ENCODE measurements at regions of chr3 and their contacts with region 1.

Region 1: DNA sequence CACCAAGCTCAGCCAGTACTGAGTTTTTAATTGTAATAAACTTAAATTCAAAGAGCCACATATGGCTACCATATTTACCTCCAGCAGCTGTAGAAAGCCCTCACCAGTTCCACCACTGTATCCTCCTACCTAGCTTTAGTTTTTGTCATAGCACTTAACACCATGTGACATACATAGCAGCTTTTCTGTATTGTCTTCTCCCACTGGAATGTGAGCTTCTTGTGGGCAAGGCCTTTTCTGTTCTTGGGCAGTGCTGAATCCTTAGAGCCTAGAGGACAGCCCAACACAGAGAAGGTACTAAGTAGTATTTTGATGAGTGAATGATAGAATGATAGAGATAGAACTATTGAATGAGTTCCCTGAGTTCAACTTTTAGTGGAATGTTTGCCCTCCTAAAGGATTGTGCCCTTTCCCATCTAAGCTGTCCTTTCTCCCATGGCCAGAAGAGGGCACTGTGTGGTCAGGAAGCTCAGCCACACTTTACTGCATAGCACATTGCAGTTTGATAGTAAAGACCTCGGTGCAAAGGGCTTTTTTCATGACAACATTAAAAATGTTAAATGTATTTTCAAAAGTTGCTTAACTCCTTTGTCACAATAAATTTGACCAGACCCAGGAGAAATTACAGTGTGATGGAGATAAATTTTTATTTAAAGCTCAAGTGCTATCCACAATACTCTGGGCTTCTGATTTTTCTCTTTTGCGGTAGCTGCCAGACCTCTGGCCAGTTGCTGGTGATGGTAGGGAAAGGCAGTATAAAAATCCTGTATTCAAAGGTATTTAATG is 115.8 kb downstream of the GHSR start:
- DNase-seq: peak; percentile 72
- ATAC-seq: peak; percentile 88
- H3K4me3 Mint-ChIP-seq: no peak overlapping the region
- H3K27ac Mint-ChIP-seq: peak overlapping the region; percentile 83
- H3K4me1 Mint-ChIP-seq: no peaks in the 10 kb centered on the region
- H3K27me3 Mint-ChIP-seq: no peaks in the 10 kb centered on the region
- CTCF ChIP-seq: peak; percentile 69

Region 2: GRCh38 chr3:172307141-172307560 is 25.3 kb before region 1 on chr3:
- CTCF ChIA-PET with region 1: interaction called, 20 read pairs
- POLR2A ChIA-PET with region 1: no interaction called
- DNase-seq: no peak
- ATAC-seq: no peak
- H3K4me3 Mint-ChIP-seq: no peak overlapping the region
- H3K27ac Mint-ChIP-seq: no peak overlapping the region
- H3K4me1 Mint-ChIP-seq: peaks cover 24% of the 10 kb centered on the region
- H3K27me3 Mint-ChIP-seq: no peaks in the 10 kb centered on the region
- CTCF ChIP-seq: no peak

Region 3: DNA sequence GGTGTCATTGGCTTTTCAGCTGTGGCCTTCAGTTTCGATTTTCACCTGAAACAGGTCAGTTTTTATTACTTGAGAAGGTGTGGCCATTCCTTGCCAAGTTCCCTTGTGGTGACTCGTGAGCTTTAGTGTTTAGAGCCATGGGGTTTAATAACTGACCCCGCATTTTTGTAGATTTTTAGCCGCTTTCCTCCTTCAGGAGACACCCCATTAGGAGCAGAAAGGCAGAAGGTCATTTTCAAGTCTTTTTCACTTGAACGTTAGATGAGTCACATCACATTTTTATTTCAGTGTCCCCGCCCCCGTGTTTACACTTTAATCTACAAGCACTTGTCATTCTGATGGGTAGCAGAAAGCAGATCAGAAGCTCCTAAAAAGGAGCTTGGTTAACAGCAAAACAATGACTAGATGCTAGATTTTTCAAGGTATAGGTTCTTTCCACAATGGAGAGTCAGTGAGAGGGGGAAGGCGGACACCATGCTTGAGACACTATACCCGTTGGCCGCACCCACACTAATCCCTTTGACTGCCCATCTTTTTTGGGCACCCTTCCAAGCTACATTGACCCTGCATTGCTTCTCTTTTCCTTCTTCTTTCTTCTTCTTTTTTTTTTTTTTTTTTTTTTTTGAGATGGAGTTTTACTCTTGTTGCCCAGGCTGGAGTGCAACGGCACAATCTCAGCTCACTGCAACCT is 16.9 kb before region 1 on chr3:
- CTCF ChIA-PET with region 1: interaction called, 20 read pairs
- POLR2A ChIA-PET with region 1: no interaction called
- DNase-seq: no peak
- ATAC-seq: no peak
- H3K4me3 Mint-ChIP-seq: no peak overlapping the region
- H3K27ac Mint-ChIP-seq: no peak overlapping the region
- H3K4me1 Mint-ChIP-seq: peaks cover 33% of the 10 kb centered on the region
- H3K27me3 Mint-ChIP-seq: no peaks in the 10 kb centered on the region
- CTCF ChIP-seq: no peak

Region 4: GRCh38 chr3:172321035-172321434 is 11.4 kb before region 1 on chr3:
- CTCF ChIA-PET with region 1: interaction called, 11 read pairs
- POLR2A ChIA-PET with region 1: no interaction called
- DNase-seq: no peak
- ATAC-seq: no peak
- H3K4me3 Mint-ChIP-seq: no peak overlapping the region
- H3K27ac Mint-ChIP-seq: peak overlapping the region; percentile 60; the same call in 1 of the 2 replicates
- H3K4me1 Mint-ChIP-seq: no peaks in the 10 kb centered on the region
- H3K27me3 Mint-ChIP-seq: no peaks in the 10 kb centered on the region
- CTCF ChIP-seq: no peak

Region 5: DNA sequence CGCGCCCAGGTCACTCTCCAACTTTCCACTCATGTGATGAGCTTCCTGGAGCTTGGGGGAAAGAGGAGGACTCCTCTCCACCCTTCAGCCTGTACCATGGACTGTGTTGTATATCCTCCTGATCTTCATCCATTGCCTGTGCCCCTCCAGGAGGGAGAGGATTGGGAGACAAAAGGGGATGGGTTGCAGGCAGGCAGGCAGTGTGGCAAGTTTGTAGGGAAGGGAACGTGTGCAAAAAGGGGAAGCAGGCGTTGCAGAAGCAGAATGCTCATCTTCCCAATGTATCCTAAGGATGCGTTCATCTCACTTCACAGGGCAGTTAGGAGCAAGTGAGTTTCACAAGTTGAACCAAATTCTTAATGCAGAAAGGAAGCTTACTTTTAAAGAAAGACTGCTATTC is 143.9 kb after region 1 on chr3:
- CTCF ChIA-PET with region 1: interaction called, 17 read pairs
- POLR2A ChIA-PET with region 1: no interaction called
- DNase-seq: no peak
- ATAC-seq: no peak
- H3K4me3 Mint-ChIP-seq: no peak overlapping the region
- H3K27ac Mint-ChIP-seq: no peak overlapping the region
- H3K4me1 Mint-ChIP-seq: peaks cover 20% of the 10 kb centered on the region
- H3K27me3 Mint-ChIP-seq: no peaks in the 10 kb centered on the region
- CTCF ChIP-seq: no peak

Region 6: GRCh38 chr3:172522871-172523818 is 190.7 kb after region 1 on chr3 and contains the start of gene TNFSF10:
- CTCF ChIA-PET with region 1: no interaction called
- POLR2A ChIA-PET with region 1: no interaction called
- DNase-seq: no peak
- ATAC-seq: peak; percentile 94
- H3K4me3 Mint-ChIP-seq: peak within 1 kb of the TSS; percentile 44
- H3K27ac Mint-ChIP-seq: peak within 1 kb of the TSS; percentile 20; the same call in 1 of the 2 replicates
- H3K4me1 Mint-ChIP-seq: peaks cover 13% of the 10 kb centered on the region
- H3K27me3 Mint-ChIP-seq: no peaks in the 10 kb centered on the region
- CTCF ChIP-seq: no peak
- total RNA-seq, gene TNFSF10: 0.22 to 0.39 TPM (median 0.27 TPM) in 3 replicates

Region 7: GRCh38 chr3:172666873-172667694 is 334.6 kb after region 1 on chr3:
- CTCF ChIA-PET with region 1: interaction called, 17 read pairs
- POLR2A ChIA-PET with region 1: no interaction called
- DNase-seq: peak; percentile 83
- ATAC-seq: peak; percentile 99
- H3K4me3 Mint-ChIP-seq: no peak overlapping the region
- H3K27ac Mint-ChIP-seq: peak overlapping the region; percentile 5; the same call in 1 of the 2 replicates
- H3K4me1 Mint-ChIP-seq: peaks cover 11% of the 10 kb centered on the region
- H3K27me3 Mint-ChIP-seq: no peaks in the 10 kb centered on the region; the same call in 1 of the 2 replicates
- CTCF ChIP-seq: peak; percentile 83